PC-9 (cell line): ENCODE measurements at regions of chr16 and their contacts with region 1.

Region 1: GRCh38 chr16:30075507-30076275 is at the start of gene PPP4C:
- DNase-seq: peak; percentile 84 to 94
- H3K4me3 ChIP-seq: peak within 1 kb of the TSS; percentile 87
- H3K27ac ChIP-seq: peak within 1 kb of the TSS; percentile 79
- H3K4me1 ChIP-seq: peaks cover 23% of the 10 kb centered on the region
- H3K27me3 ChIP-seq: no peaks in the 10 kb centered on the region
- CTCF ChIP-seq: no peak
- total RNA-seq, gene PPP4C: 246 and 268 TPM in 2 replicates

Region 2: DNA sequence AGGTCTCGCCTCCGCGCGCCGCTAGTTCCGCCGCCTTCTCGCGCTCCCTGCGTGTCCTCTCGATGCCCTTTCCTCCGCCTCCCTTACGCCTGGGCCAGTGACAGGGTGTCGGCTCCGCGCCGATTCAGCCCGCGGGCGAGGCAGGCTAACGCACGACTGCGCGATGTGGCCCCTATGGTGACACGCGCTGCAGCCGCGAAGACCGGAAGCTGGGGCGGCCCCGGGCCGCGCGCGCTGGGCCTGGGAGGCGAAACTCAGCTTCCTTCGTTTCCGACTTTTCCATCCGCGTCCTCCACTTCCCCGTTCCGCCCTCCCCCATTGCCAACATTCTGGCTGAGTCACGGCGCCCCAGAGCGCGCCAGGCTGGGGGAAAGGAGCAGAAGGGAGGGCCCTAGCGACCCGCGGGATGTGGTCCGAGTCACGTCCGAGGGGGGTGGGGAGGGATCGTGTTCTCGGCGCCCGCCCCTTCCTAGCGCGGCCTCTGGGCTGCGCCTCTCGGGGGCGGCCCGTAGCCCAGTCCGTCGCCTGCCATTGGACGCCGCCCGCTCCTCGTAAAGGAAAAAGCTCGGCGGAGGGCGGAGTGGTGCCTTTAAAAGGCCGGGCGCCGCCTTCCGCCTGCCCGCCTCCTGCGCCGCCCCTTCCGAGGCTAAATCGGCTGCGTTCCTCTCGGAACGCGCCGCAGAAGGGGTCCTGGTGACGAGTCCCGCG is 10.4 kb before region 1 on chr16 and contains the start of gene ALDOA:
- CTCF ChIA-PET with region 1: interaction called, 11 read pairs
- POLR2A ChIA-PET with region 1: interaction called, 7 read pairs
- intact Hi-C with region 1: no loop called
- DNase-seq: peak; percentile 95 to 100
- H3K4me3 ChIP-seq: peak within 1 kb of the TSS; percentile 94
- H3K27ac ChIP-seq: peak within 1 kb of the TSS; percentile 92
- H3K4me1 ChIP-seq: peaks cover 50% of the 10 kb centered on the region
- H3K27me3 ChIP-seq: no peaks in the 10 kb centered on the region
- CTCF ChIP-seq: no peak
- total RNA-seq, gene ALDOA: 2,395 and 3,090 TPM in 2 replicates

Region 3: GRCh38 chr16:30104494-30104968 is 28.8 kb after region 1 on chr16:
- CTCF ChIA-PET with region 1: no interaction called
- POLR2A ChIA-PET with region 1: interaction called, 11 read pairs
- intact Hi-C with region 1: no loop called
- DNase-seq: peak; percentile 89 to 97
- H3K4me3 ChIP-seq: 0 out of 2 replicates have a peak overlapping the region, but pooled peaks have one; percentile 3
- H3K27ac ChIP-seq: peak overlapping the region; percentile 73
- H3K4me1 ChIP-seq: peaks cover 23% of the 10 kb centered on the region
- H3K27me3 ChIP-seq: no peaks in the 10 kb centered on the region
- CTCF ChIP-seq: no peak

Region 4: DNA sequence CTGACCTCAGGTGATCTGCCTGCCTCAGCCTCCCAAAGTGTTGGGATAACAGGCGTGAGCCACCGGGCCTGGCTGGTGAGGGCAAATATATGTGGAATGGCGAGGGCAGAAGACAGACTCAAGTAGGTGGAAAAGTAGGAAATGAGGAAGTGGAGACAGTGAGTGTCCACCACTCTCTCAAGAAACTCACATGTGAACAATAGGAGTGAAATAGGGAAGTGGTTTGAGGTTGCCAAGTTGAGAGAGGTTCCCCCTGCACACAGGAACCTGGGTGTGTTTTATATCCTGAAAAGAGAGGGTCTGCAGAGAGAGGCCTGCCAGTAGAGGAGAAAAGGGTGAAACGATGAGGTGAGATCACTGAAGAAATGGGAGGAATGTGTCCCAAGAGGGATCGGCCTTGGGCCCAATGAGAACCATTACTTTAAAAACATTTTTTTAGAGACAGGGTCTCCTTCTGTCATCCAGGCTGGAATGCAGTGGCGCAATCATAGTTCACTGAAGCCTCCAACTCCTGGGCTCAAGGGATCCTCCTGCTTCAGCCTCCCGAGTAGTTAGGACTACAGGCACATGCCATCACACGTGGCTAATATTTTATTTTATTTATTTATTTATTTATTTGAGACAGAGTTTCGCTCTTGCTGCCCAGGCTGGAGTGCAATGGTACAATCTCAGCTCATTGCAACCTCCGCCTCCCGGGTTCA is 90.7 kb after region 1 on chr16:
- CTCF ChIA-PET with region 1: no interaction called
- POLR2A ChIA-PET with region 1: no interaction called
- intact Hi-C with region 1: no loop called
- DNase-seq: no peak
- H3K4me3 ChIP-seq: no peak overlapping the region
- H3K27ac ChIP-seq: no peak overlapping the region
- H3K4me1 ChIP-seq: no peaks in the 10 kb centered on the region
- H3K27me3 ChIP-seq: no peaks in the 10 kb centered on the region
- CTCF ChIP-seq: no peak